Dendritic cell treated with granulocyte-macrophage colony-stimulating factor and Interleukin-4, amounts not matched to agents 40 ng/mL and 50 ng/mL, for 4 days (primary cell): ENCODE measurements at regions of chr11 and their contacts with region 1.

Region 1: GRCh38 chr11:110429731-110430266 is at the start of gene FDX1:
- H3K4me3 Mint-ChIP-seq: peak within 1 kb of the TSS; percentile 94
- H3K27ac Mint-ChIP-seq: peak within 1 kb of the TSS; percentile 95
- H3K4me1 Mint-ChIP-seq: peaks cover 35% of the 10 kb centered on the region
- H3K27me3 Mint-ChIP-seq: no peaks in the 10 kb centered on the region

Region 2: GRCh38 chr11:110200241-110200640 is 229.6 kb before region 1 on chr11:
- intact Hi-C with region 1: loop called (anchors 1 kb)
- H3K4me3 Mint-ChIP-seq: no peak overlapping the region
- H3K27ac Mint-ChIP-seq: no peak overlapping the region
- H3K4me1 Mint-ChIP-seq: no peaks in the 10 kb centered on the region
- H3K27me3 Mint-ChIP-seq: peaks cover 1% of the 10 kb centered on the region

Region 3: DNA sequence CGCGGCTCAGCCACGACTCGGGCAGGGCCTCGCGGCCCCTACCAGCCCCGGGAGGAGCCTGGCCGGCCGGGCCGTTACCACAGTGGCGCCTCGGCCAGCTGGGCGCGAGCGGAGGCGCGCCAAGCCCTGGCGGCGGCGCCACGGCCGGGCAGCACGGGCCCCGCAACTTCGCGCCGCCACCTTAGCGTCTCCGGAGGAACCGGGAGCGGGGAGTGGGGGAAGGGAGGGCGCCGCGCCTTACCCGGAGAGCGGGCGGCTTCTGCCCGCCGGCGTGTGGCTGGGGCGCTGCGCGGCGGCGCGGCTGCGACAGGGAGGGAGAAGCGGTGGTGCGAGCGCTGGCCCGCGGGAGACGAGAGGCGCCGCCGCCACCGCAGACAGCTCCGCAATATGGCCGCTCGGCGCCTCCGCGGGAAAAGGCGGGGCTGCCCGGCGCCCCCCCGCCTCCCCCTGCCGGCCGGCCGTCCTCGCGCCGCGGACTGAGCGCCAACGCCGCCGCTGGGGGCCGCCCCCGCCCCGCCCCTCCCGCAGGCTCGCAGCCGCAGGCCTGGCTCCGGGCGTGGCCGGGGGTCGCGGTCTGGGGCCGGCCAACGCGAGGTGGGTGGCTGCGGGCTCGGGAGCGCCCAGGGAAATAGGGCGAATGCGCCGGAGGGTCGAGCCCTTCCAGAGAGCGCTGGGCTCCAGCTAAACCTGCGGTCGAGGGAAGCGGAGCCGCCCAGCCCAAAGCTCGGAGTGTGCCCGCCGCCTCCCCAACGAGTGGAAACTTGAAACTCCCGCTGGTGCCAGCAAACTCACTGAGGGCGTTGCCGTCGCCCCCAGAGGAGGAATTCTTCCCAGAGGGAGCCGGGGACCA is 133.3 kb before region 1 on chr11 and contains the start of gene RDX:
- intact Hi-C with region 1: loop called (anchors 5 kb)
- H3K4me3 Mint-ChIP-seq: peak within 1 kb of the TSS; percentile 81
- H3K27ac Mint-ChIP-seq: peak within 1 kb of the TSS; percentile 82
- H3K4me1 Mint-ChIP-seq: peaks cover 28% of the 10 kb centered on the region
- H3K27me3 Mint-ChIP-seq: no peaks in the 10 kb centered on the region

Region 4: GRCh38 chr11:110479108-110480101 is 49.6 kb after region 1 on chr11:
- intact Hi-C with region 1: loop called (anchors 5 kb)
- H3K4me3 Mint-ChIP-seq: peak overlapping the region; percentile 32
- H3K27ac Mint-ChIP-seq: peak overlapping the region; percentile 79
- H3K4me1 Mint-ChIP-seq: peaks cover 49% of the 10 kb centered on the region
- H3K27me3 Mint-ChIP-seq: no peaks in the 10 kb centered on the region